B cell (primary cell): ENCODE measurements at regions of chr15 and their contacts with region 1.

Region 1: DNA sequence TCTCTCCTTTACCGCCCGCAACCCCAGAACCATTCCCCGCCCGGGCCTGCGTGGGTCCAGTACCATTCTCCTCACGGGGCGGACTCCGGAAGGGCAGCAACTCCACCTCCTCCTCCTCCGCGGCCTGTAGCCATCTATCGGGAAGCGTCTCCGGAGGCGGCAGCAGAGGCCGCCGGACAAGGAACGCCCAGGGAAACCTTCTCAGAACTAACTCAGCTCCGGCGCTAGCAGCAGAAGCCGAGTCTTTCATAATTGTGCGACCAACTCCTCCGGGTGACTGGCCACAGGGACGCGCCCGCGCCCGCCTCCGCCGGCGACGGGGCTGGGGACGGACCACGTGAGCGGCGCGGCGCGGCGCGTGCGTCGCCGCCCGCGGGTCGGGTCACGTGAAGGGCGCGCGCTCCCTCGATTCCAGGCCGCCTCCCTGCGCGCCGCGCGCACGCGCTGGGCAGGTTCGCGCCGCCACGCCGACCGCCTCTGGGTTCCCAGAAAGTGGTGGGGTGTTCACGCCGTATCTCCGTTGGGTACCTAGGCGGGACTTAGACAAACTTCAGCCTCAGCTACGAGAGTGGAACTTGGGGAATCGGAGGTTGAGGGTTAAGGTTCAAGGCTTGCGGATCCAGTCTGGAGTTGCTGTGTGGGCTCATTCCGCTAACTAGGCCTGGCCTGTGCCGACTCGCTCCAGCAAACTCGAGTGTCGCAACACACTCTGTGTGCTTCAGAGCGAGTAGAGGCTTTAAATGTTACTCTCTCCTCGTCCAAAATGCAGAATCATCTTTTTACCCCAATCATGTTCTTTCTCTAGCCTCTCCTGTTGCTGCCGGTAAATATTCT is at the start of gene TRPM7:
- DNase-seq: peak; percentile 97
- ATAC-seq: peak; percentile 81
- H3K4me3 ChIP-seq: peak within 1 kb of the TSS; percentile 74 to 100 (median 96)
- H3K4me3 Mint-ChIP-seq: peak within 1 kb of the TSS; percentile 100
- H3K27ac ChIP-seq: peak within 1 kb of the TSS; percentile 98 to 100
- H3K27ac Mint-ChIP-seq: peak within 1 kb of the TSS; percentile 99
- H3K4me1 ChIP-seq: peaks cover 19 to 24% of the 10 kb centered on the region in 2 donors
- H3K4me1 Mint-ChIP-seq: peaks cover 46% of the 10 kb centered on the region
- H3K27me3 ChIP-seq: no peaks in the 10 kb centered on the region
- H3K27me3 Mint-ChIP-seq: no peaks in the 10 kb centered on the region
- CTCF ChIP-seq: no peak
- total RNA-seq, gene TRPM7: 77.2 and 86.4 TPM in 2 replicates

Region 2: DNA sequence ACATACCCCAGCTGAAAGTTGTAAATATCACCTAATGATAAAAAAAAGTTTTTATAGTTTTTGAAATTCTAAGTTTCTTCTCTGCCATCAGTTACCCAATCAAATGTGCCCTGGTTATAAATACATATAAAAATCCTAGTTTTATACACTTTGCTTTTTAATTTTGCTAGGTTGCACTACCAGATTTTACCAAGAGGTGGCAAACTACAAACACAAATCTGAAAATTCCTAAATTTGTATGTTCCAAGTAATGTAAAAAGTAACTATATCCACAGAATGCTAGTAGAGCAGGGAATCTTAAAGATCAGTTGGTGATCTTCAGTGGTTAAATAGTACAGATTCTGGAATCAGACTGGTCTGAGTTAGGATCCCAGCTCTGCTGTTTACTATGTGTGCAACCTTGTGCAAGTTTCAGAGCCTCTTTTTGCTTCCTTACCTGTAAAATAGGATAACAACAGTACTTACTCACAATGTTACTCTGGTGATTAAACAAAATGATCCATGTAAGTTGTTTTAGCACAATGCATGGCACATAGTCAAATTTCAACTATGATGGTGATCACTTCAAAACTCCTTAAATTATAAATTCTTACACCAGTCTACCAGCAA is 11.0 kb before region 1 on chr15:
- CTCF ChIA-PET with region 1: interaction called, 16 read pairs
- POLR2A ChIA-PET with region 1: no interaction called
- intact Hi-C with region 1: loop called (anchors 1 kb)
- DNase-seq: peak; percentile 54
- ATAC-seq: no peak
- H3K4me3 ChIP-seq: no peak overlapping the region
- H3K4me3 Mint-ChIP-seq: no peak overlapping the region
- H3K27ac ChIP-seq: no peak overlapping the region
- H3K27ac Mint-ChIP-seq: no peak overlapping the region
- H3K4me1 ChIP-seq: peaks cover 3 to 5% of the 10 kb centered on the region in 2 donors
- H3K4me1 Mint-ChIP-seq: peaks cover 24% of the 10 kb centered on the region
- H3K27me3 ChIP-seq: no peaks in the 10 kb centered on the region
- H3K27me3 Mint-ChIP-seq: no peaks in the 10 kb centered on the region
- CTCF ChIP-seq: peak; percentile 96

Region 3: DNA sequence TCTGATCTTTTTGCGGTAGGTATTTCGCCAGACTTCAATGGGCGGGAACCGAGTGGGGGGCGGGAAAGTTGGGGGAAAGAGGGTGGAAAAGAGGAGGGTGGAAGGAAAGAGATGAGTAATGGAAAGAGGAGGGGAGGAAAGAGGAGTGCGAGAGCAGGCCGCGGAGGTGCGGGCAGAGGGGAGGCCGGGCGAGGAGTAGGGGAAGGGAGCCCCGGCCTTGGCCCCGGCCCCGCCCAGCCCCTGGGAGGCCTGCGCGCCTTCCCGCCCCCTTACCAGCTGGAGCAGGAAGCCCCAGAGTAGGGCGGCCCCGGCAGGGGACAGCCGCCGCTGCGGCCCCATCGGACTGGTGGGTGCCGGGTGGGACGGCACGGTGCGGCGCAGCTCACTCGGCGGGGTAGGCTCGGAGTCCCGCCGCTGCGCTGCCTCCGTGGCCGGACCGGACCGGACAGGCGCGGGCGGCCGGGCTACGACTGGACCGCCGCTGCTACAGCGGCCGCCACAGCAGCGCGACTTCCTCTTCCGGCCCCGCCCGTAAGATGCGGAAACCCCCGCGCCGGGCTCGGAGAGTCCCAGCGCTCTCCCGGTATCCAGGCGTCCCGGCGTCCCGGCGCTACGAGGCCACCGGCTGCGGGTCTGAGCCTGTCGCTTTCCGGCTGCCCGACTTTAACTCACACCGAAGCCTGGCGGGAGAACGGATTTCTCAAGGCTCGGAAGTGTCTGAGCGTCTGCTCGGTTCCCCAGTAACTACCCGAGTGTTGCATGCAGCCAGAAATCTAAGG is 78.7 kb after region 1 on chr15 and contains the start of gene SPPL2A:
- CTCF ChIA-PET with region 1: no interaction called
- POLR2A ChIA-PET with region 1: no interaction called
- intact Hi-C with region 1: loop called (anchors 1 kb)
- DNase-seq: peak; percentile 91
- ATAC-seq: peak; percentile 94
- H3K4me3 ChIP-seq: peak within 1 kb of the TSS; percentile 84 to 98 (median 93)
- H3K4me3 Mint-ChIP-seq: peak within 1 kb of the TSS; percentile 88
- H3K27ac ChIP-seq: peak within 1 kb of the TSS; percentile 91
- H3K27ac Mint-ChIP-seq: peak within 1 kb of the TSS; percentile 93
- H3K4me1 ChIP-seq: peaks cover 17 to 23% of the 10 kb centered on the region in 2 donors
- H3K4me1 Mint-ChIP-seq: peaks cover 39% of the 10 kb centered on the region
- H3K27me3 ChIP-seq: no peaks in the 10 kb centered on the region
- H3K27me3 Mint-ChIP-seq: no peaks in the 10 kb centered on the region
- CTCF ChIP-seq: no peak
- total RNA-seq, gene SPPL2A: 78.3 and 78.4 TPM in 2 replicates